ENCODE measurements at regions of chr1 and their contacts with region 1.

Region 1: DNA sequence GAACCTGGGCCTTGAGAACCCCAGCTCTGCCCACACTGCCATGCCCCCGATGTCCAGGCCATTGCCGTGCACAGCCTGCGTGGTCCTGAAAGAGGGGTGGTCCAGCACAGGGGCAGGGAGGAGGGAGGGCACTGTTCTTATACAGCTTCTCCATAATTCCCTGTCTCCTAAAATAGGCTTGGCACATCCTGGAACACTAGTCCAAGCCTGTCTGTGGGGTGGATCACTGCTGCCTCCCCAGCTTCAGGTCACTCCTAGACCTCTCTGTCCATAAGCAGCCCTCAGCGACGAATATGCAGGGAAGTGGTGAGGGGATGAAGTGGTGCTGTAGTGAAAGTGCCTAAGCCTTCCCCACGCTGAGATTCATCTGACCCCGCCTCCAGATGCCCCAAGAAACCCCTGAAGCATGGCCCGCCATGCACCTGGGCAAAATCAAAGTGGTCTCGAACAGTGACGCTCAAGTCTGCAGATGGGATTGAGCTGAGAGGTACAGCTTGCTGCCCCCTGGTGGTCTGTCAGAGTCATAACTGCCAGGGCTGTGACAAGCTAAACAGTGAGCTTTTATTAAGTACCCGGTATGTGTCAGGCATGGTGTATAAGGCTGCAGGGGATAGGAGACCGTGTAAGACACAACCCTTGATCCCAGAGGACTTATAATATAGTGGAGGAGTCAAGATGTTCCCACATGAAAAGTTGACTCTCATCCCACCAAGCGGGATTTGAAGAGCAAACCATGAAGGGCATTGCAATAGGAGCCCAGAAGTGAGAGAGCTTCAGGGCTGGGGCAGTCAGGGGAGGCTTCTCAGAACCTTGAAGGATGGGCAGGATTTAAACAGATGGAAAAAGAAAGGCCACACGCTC is 66.6 kb downstream of the FAM163A start:
- DNase-seq: peak in 3 of 4 donors; percentile 45 to 82 (median 63)
- ATAC-seq: peak; percentile 76
- H3K4me3 ChIP-seq: no peak overlapping the region
- H3K27ac ChIP-seq: no peak overlapping the region
- H3K4me1 ChIP-seq: peaks cover 3 to 6% of the 10 kb centered on the region in 2 donors
- H3K27me3 ChIP-seq: peaks cover 0 to 30% of the 10 kb centered on the region in 2 donors
- CTCF ChIP-seq: peak; percentile 82 to 92

Region 2: GRCh38 chr1:179706339-179706941 is 103.3 kb before region 1 on chr1:
- intact Hi-C with region 1: loop called (anchors 5 kb)
- DNase-seq: peak in 2 of 4 donors; percentile 62 to 83
- ATAC-seq: peak; percentile 70
- H3K4me3 ChIP-seq: no peak overlapping the region
- H3K27ac ChIP-seq: no peak overlapping the region
- H3K4me1 ChIP-seq: peaks cover 0 to 12% of the 10 kb centered on the region in 2 donors
- H3K27me3 ChIP-seq: no peaks in the 10 kb centered on the region
- CTCF ChIP-seq: peak; percentile 55 to 71

Region 3: DNA sequence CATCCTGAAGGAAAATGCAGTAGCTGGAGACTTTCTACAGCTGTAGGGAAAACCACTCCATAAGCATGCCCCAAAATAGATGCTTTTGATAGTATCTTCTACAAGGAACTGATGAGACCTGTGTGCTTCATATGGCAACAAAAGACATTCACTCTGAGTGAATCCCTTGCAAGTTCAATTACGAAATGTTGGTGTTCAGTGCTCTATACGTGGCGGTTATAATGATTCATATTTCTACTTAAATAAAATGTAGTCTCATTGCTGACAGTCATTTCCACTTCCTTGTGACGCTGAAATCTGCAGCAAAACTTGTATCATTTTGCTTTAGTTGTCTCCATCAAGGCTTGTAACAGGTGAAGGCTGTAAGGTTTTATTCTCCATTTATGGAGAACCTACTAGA is 47.3 kb after region 1 on chr1:
- intact Hi-C with region 1: no loop called
- DNase-seq: no peak
- ATAC-seq: no peak
- H3K4me3 ChIP-seq: no peak overlapping the region
- H3K27ac ChIP-seq: no peak overlapping the region
- H3K4me1 ChIP-seq: peaks cover 0 to 11% of the 10 kb centered on the region in 2 donors
- H3K27me3 ChIP-seq: no peaks in the 10 kb centered on the region
- CTCF ChIP-seq: no peak

Measured in left lung (tissue), 14 donors.